ENCODE measurements at regions of chr9 and their contacts with region 1.

Region 1: GRCh38 chr9:68872026-68872501 is 141.8 kb downstream of the PRKACG start:
- DNase-seq: peak; percentile 79
- ATAC-seq: peak; percentile 95

Region 2: DNA sequence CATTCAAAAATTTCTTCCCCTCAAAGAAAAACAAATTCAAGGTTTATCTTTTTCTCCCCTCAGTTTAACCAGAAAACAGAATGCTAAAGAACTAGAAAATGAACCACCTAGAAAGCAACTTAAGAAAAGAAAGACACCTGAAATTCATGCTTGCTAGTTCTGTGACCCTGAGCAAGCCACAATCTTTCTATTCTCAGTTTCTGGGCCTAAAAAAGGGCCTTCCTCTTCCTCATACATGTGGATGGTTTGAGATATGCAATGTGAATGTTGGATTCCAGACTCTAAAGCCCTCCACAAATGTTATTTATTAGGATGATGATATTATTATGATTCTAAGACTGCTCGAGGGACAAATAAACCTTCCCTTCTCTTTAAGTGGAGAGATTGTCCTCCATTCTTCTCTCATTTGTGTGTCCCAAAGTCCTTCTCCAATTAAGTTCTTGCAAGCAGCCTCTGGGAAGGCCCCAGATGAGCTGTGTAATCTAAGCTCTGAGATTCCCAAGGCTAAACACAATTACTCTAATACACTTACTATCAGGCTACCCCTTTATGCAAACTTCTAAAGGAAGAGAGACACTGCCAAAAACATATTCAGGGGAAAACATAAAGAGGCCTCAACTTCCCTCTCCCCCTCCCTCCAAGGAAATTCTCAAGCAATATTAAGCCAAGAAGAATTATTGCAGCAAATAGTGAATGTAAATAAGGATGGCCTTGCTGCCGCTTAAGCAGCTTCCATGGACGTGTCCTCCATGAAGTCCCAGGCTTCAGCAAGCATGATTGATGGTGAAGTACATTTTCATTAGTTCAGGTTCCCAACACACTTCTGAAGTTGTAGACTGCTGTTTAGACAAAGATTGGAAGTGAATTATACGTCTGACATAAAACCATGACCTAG is 61.6 kb after region 1 on chr9:
- intact Hi-C with region 1: loop called (anchors 10 kb)
- DNase-seq: no peak
- ATAC-seq: no peak

Measured in left ventricle myocardium superior (tissue), 1 donor.